ENCODE measurements at regions of chr19 and their contacts with region 1.

Region 1: GRCh38 chr19:40974633-40975037 is 16.4 kb upstream of the CYP2B6 start:
- DNase-seq: peak; percentile 56
- H3K27ac ChIP-seq: no peak overlapping the region
- CTCF ChIP-seq: peak; percentile 84

Region 2: GRCh38 chr19:40920300-40921004 is 54.2 kb before region 1 on chr19:
- CTCF ChIA-PET with region 1: no interaction called
- POLR2A ChIA-PET with region 1: no interaction called
- DNase-seq: no peak
- H3K27ac ChIP-seq: no peak overlapping the region
- CTCF ChIP-seq: no peak

Region 3: DNA sequence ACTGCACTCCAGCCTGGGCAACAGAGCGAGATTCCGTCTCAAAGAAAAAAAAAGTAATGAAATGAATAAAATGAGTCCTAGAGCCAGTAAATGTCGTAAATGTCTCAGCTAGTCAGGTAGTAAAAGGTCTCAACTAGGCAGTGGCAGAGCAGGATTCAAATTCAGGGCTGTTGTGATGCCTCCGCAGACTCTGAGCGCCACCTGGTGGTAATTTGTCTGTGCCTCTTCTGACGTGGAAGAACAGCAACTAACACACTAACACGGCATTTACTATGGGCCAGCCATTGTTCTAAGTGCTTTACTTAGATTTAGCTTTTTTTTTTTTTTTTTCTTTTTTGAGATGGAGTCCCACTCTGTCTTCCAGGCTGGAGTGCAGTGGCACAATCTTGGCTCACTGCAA is 169.8 kb after region 1 on chr19:
- CTCF ChIA-PET with region 1: interaction called, 11 read pairs
- POLR2A ChIA-PET with region 1: interaction called, 4 read pairs
- DNase-seq: peak; percentile 51
- H3K27ac ChIP-seq: no peak overlapping the region
- CTCF ChIP-seq: peak; percentile 90